PC-3 (cell line): ENCODE measurements at regions of chr10 and their contacts with region 1.

Region 1: DNA sequence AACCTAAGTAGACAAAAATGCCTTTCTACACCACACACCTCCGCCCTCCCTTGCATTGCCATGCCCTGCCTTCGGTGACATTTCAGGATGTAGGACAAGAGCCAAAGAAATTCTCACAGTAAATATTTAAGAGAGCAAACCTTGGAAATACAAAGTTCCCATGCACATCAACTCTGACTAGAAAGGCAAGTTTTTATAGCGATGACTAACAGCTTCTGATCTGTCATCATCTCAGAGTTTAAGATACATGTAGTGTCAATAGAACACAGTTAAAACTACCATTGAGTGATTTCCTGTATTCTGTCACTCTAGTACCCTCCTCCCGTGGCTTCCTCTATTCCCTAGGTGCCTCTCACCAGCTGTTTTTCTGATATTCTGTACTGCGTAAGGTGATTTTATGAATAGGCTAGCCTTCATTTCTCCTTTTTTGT is 20.7 kb downstream of the SLC16A9 start:
- DNase-seq: peak; percentile 100
- ATAC-seq: peak; percentile 97
- H3K4me3 ChIP-seq: peak overlapping the region; percentile 20
- H3K27ac ChIP-seq: peak overlapping the region; percentile 90
- H3K4me1 ChIP-seq: peaks cover 30% of the 10 kb centered on the region
- H3K27me3 ChIP-seq: no peaks in the 10 kb centered on the region
- CTCF ChIP-seq: no peak

Region 2: DNA sequence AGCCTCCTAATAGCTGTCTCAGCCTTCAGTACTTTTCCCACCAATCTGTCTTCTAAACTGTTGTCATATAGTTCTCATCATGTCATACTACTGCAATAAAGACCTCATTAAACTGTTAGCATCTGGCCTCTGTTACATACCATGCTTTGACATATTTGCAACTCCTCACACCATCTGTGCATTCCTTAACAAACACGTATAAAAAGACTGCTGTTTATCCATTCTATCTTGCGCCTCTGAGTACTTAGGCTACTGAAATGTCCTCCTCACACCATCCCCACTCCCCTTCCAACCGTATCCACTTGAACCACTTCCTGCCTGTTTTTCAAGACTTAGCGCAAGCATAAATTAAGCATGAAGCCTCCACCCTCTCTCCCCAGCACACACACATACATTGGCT is 20.8 kb before region 1 on chr10:
- CTCF ChIA-PET with region 1: no interaction called
- POLR2A ChIA-PET with region 1: no interaction called
- intact Hi-C with region 1: no loop called
- DNase-seq: no peak
- ATAC-seq: no peak
- H3K4me3 ChIP-seq: no peak overlapping the region
- H3K27ac ChIP-seq: no peak overlapping the region
- H3K4me1 ChIP-seq: no peaks in the 10 kb centered on the region
- H3K27me3 ChIP-seq: no peaks in the 10 kb centered on the region
- CTCF ChIP-seq: no peak

Region 3: DNA sequence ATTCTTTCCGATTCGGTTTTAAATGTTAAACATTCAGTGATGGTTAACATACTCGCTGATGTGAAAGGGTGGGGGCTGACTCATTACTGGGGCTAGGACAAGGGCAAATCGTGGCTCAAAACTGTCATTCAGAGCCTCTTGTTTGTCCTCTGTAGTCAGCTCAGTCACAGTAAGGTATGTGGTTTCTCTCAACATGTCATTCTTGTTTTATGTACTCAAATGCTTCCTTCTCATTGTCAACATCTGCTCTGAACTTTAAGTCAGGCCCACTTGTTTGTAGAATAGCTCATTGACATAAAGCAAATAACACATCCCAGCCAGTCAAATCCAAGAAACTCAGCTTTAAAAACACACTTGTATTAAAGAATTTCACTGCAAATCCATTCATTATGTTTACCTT is 13.4 kb after region 1 on chr10:
- CTCF ChIA-PET with region 1: no interaction called
- POLR2A ChIA-PET with region 1: no interaction called
- intact Hi-C with region 1: loop called (anchors 1 kb)
- DNase-seq: peak; percentile 97
- ATAC-seq: peak; percentile 100
- H3K4me3 ChIP-seq: no peak overlapping the region
- H3K27ac ChIP-seq: peak overlapping the region; percentile 60
- H3K4me1 ChIP-seq: peaks cover 18% of the 10 kb centered on the region
- H3K27me3 ChIP-seq: no peaks in the 10 kb centered on the region
- CTCF ChIP-seq: no peak

Region 4: GRCh38 chr10:59748834-59749233 is 59.9 kb after region 1 on chr10:
- CTCF ChIA-PET with region 1: no interaction called
- POLR2A ChIA-PET with region 1: no interaction called
- intact Hi-C with region 1: loop called (anchors 1 kb)
- DNase-seq: peak; percentile 82
- ATAC-seq: peak; percentile 93
- H3K4me3 ChIP-seq: no peak overlapping the region
- H3K27ac ChIP-seq: peak overlapping the region; percentile 76
- H3K4me1 ChIP-seq: peaks cover 14% of the 10 kb centered on the region
- H3K27me3 ChIP-seq: no peaks in the 10 kb centered on the region
- CTCF ChIP-seq: no peak

Region 5: DNA sequence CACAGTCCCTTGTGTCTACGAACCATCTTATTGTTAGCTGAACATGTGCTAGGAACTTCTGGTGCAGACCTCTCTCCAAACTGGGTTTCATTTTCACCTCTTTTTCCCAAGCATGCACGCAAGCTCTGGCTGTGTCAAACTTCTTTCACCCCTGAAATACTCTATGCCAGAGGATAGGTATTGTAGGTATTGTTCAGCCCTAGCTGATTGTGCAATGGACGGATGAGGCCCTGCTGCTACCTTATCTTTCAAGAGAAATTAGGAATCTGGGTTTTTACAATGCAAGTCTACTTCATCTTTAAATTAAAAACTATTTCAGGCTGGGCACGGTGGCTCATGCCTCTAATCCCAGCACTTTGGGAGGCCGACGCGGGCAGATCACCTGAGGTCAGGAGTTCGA is 92.6 kb after region 1 on chr10:
- CTCF ChIA-PET with region 1: no interaction called
- POLR2A ChIA-PET with region 1: no interaction called
- intact Hi-C with region 1: no loop called
- DNase-seq: no peak
- ATAC-seq: no peak
- H3K4me3 ChIP-seq: no peak overlapping the region
- H3K27ac ChIP-seq: no peak overlapping the region
- H3K4me1 ChIP-seq: no peaks in the 10 kb centered on the region
- H3K27me3 ChIP-seq: no peaks in the 10 kb centered on the region
- CTCF ChIP-seq: no peak

Region 6: GRCh38 chr10:59808896-59809643 is 120.1 kb after region 1 on chr10:
- CTCF ChIA-PET with region 1: no interaction called
- POLR2A ChIA-PET with region 1: no interaction called
- intact Hi-C with region 1: loop called (anchors 5 kb)
- DNase-seq: peak; percentile 93
- ATAC-seq: peak; percentile 96
- H3K4me3 ChIP-seq: no peak overlapping the region
- H3K27ac ChIP-seq: no peak overlapping the region
- H3K4me1 ChIP-seq: no peaks in the 10 kb centered on the region
- H3K27me3 ChIP-seq: no peaks in the 10 kb centered on the region
- CTCF ChIP-seq: peak; percentile 99

Region 7: GRCh38 chr10:59991661-59992060 is 302.7 kb after region 1 on chr10:
- CTCF ChIA-PET with region 1: no interaction called
- POLR2A ChIA-PET with region 1: interaction called, 10 read pairs
- intact Hi-C with region 1: no loop called
- DNase-seq: peak; percentile 96
- ATAC-seq: peak; percentile 97
- H3K4me3 ChIP-seq: peak overlapping the region; percentile 39; the same call in 1 of the 2 replicates
- H3K27ac ChIP-seq: peak overlapping the region; percentile 75
- H3K4me1 ChIP-seq: peaks cover 32% of the 10 kb centered on the region
- H3K27me3 ChIP-seq: no peaks in the 10 kb centered on the region
- CTCF ChIP-seq: no peak